A549 (cell line): ENCODE measurements at regions of chr3 and their contacts with region 1.

Region 1: GRCh38 chr3:136752422-136753325 is 496 bp upstream of the STAG1 start:
- DNase-seq: peak; percentile 63 to 97
- ATAC-seq: peak; percentile 86 to 95
- H3K4me3 ChIP-seq: peak overlapping the region; percentile 57
- H3K27ac ChIP-seq: peak overlapping the region; percentile 93 to 100
- H3K4me1 ChIP-seq: peaks cover 22% of the 10 kb centered on the region
- CTCF ChIP-seq: 0 out of 3 replicates have a peak, but pooled peaks have one; percentile 5
- EP300 ChIP-seq: no peak
- POLR2A ChIP-seq: peak; percentile 27
- RAD21 ChIP-seq: peak in 1 of 2 experiments; percentile 32; a peak in 2 of 5 replicates

Region 2: DNA sequence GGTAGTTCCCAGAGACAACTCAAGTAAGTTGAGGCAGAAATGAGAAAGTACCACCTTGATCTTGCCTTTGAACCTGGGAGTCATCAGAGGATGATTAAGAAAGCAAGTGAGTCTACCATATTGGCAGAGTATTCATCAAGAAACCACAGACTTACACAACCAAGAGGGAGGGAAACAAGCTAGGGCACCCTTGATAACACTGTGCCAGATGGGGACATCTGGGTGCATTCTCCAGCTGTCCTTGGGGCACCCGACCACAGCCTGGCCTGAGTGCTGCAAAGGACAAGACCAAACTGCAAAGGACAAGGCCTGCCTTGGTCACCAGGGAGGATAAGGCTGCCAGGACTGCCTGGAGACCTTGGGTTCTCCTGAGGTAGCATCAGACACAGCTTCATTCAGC is 1404.0 kb before region 1 on chr3:
- CTCF ChIA-PET with region 1: no interaction called
- POLR2A ChIA-PET with region 1: no interaction called
- DNase-seq: no peak
- ATAC-seq: no peak
- H3K4me3 ChIP-seq: no peak overlapping the region
- H3K27ac ChIP-seq: no peak overlapping the region
- H3K4me1 ChIP-seq: no peaks in the 10 kb centered on the region
- CTCF ChIP-seq: no peak
- EP300 ChIP-seq: no peak
- POLR2A ChIP-seq: no peak
- RAD21 ChIP-seq: no peak

Region 3: DNA sequence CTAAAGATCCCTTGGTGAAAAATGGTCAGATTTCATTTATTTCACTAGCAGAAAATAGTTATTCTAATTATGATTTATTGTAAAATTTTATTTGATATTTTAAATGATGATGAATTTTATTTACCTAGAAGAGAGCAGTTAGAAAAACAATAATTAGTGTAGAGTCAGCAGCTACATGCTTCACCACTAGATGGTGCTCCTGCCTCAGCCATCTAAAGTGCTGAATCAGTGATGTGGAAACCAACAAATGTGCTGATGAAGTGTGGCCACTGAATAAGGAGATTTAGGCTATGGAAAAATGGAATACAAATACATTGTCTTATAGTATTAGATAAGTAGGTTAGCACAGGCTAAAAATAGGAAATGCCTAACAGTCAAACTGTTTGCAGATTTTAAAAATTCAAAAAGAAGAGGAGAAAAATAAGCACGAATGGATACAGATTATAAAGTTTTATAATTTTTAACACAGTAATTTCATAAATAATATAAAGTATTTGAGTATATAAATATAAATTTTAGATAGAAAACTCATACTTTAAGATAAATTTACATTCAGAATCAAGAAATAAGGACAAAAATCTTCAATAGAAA is 677.4 kb before region 1 on chr3:
- CTCF ChIA-PET with region 1: interaction called, 24 read pairs
- POLR2A ChIA-PET with region 1: interaction called, 12 read pairs
- DNase-seq: peak; percentile 5 to 70
- ATAC-seq: peak in 1 of 2 experiments; percentile 70; a peak in 3 of 6 replicates
- H3K4me3 ChIP-seq: no peak overlapping the region
- H3K27ac ChIP-seq: no peak overlapping the region
- H3K4me1 ChIP-seq: peaks cover 18% of the 10 kb centered on the region; the same call in 2 of the 3 replicates
- CTCF ChIP-seq: peak; percentile 88
- EP300 ChIP-seq: no peak
- POLR2A ChIP-seq: no peak
- RAD21 ChIP-seq: peak; percentile 93 to 96

Region 4: DNA sequence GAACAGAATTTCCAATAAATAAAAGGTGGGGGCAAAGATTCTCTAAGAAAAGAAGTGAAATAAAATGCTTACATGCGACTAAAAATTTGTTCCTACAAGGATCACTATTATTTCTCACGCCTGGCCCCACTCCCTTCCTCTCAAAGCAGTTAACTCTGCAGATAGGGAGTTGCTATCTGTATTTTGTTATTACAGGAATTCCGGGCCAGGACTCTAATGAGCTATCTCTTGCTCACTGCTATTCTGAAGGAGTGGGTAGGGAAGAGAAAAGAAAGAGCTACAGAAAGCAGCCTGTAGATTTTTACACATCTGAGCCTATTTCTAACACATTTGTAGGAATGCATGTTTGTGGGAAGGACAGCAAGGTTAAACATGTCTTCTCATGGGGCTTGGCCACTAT is 362.1 kb before region 1 on chr3:
- CTCF ChIA-PET with region 1: interaction called, 20 read pairs
- POLR2A ChIA-PET with region 1: interaction called, 19 read pairs
- DNase-seq: no peak
- ATAC-seq: no peak
- H3K4me3 ChIP-seq: no peak overlapping the region
- H3K27ac ChIP-seq: no peak overlapping the region
- H3K4me1 ChIP-seq: no peaks in the 10 kb centered on the region
- CTCF ChIP-seq: no peak
- EP300 ChIP-seq: no peak
- POLR2A ChIP-seq: no peak
- RAD21 ChIP-seq: no peak

Region 5: DNA sequence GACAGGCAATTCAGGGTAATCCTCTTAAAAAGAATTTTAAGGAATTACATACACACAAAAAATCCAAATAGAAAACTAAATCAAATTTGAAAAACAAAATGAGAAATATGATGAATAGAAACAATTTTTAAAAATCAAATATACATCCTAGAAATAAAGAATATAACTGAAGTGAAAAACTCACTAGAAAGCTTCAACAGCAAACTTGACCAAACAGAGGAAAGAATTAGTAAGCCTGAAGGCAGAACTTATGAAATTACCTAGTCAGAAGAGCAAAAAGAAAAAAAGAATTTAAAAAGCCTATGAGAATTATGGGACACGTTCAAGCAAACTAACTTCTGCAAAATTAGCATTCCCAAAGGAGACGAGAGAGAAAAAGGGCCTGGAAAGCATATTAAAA is 296.5 kb before region 1 on chr3:
- CTCF ChIA-PET with region 1: no interaction called
- POLR2A ChIA-PET with region 1: no interaction called
- DNase-seq: no peak
- ATAC-seq: no peak
- H3K4me3 ChIP-seq: no peak overlapping the region
- H3K27ac ChIP-seq: no peak overlapping the region
- H3K4me1 ChIP-seq: no peaks in the 10 kb centered on the region
- CTCF ChIP-seq: no peak
- EP300 ChIP-seq: no peak
- POLR2A ChIP-seq: no peak
- RAD21 ChIP-seq: no peak

Region 6: GRCh38 chr3:136741063-136741462 is 11.6 kb before region 1 on chr3:
- CTCF ChIA-PET with region 1: interaction called, 18 read pairs
- POLR2A ChIA-PET with region 1: interaction called, 3 read pairs
- DNase-seq: no peak
- ATAC-seq: no peak
- H3K4me3 ChIP-seq: no peak overlapping the region
- H3K27ac ChIP-seq: 0 out of 6 replicates have a peak overlapping the region, but pooled peaks of 1 of the 2 experiments have one; percentile 38
- H3K4me1 ChIP-seq: peaks cover 19% of the 10 kb centered on the region; the same call in 2 of the 3 replicates
- CTCF ChIP-seq: no peak
- EP300 ChIP-seq: no peak
- POLR2A ChIP-seq: no peak
- RAD21 ChIP-seq: no peak

Region 7: DNA sequence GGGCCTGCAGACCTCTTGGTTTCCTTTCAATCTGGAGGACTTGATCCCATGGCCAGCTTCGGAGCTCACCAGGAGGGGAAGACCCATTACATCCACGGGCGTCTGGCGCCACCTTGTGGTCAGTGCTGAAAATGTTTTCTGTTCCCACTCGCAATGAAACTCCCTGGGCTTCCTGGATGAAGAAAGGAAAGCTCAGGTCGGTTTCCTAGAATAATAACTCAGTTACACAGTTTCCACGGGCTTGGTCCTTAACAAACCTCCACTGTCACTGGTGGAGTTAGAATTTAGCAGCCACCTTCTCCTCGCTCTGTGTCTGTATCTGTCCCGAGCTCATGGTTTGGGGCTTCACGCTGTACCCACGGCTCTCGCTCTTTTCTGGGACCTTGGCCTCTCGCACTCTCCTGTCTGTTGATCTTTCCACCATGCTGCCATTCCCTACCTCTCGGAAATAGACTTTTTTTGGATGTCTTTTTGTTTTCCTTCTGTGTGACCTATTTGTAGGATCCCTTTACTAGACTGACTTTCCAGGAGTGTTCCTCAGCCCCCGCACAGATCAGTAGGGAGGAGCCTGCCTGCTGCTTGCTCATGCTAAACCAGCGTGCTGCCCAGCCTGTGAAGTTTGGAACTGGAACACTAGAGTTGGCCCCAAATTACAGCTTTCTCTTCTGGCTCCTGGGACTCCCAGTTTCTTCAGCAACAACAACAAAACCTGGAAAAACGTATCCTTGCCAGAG is 261.4 kb after region 1 on chr3:
- CTCF ChIA-PET with region 1: interaction called, 45 read pairs
- POLR2A ChIA-PET with region 1: interaction called, 38 read pairs
- DNase-seq: peak; percentile 77 to 82
- ATAC-seq: peak; percentile 93 to 97
- H3K4me3 ChIP-seq: peak overlapping the region; percentile 28
- H3K27ac ChIP-seq: peak overlapping the region; percentile 47 to 78
- H3K4me1 ChIP-seq: no peaks in the 10 kb centered on the region
- CTCF ChIP-seq: peak; percentile 80
- EP300 ChIP-seq: no peak
- POLR2A ChIP-seq: no peak
- RAD21 ChIP-seq: peak; percentile 95 to 96

Region 8: GRCh38 chr3:137062250-137062649 is 309.6 kb after region 1 on chr3:
- CTCF ChIA-PET with region 1: no interaction called
- POLR2A ChIA-PET with region 1: no interaction called
- DNase-seq: no peak
- ATAC-seq: no peak
- H3K4me3 ChIP-seq: no peak overlapping the region
- H3K27ac ChIP-seq: no peak overlapping the region
- H3K4me1 ChIP-seq: no peaks in the 10 kb centered on the region
- CTCF ChIP-seq: no peak
- EP300 ChIP-seq: no peak
- POLR2A ChIP-seq: no peak
- RAD21 ChIP-seq: no peak